Body of pancreas (tissue), 4 donors: ENCODE measurements at regions of chr14 and their contacts with region 1.

Region 1: DNA sequence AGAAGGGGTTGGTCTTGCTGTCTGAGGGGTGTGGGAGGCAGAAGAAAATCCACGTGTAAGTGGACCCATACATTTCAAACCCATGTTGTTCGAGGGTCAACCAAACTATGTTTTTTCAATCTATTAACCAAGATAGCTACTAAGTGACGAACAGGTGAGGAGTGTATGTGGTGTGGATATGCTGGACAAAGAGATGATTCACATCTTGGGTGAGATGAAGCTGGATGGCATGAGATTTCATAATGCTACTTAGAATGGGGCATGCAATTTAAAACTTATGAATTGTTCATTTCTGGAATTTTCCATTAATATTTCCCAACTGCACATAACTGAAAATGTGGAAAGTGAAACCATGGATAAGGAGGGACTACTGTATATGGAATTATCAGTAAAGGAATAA is 17.9 kb upstream of the KTN1 start:
- DNase-seq: no peak
- ATAC-seq: no peak
- H3K4me3 ChIP-seq: no peak overlapping the region
- H3K27ac ChIP-seq: no peak overlapping the region
- H3K4me1 ChIP-seq: peaks cover 3% of the 10 kb centered on the region
- H3K27me3 ChIP-seq: no peaks in the 10 kb centered on the region
- CTCF ChIP-seq: no peak
- POLR2A ChIP-seq: no peak

Region 2: GRCh38 chr14:55446218-55446654 is 115.9 kb before region 1 on chr14:
- intact Hi-C with region 1: loop called (anchors 10 kb)
- DNase-seq: peak; percentile 68 to 71 (median 69)
- ATAC-seq: peak; percentile 77
- H3K4me3 ChIP-seq: no peak overlapping the region
- H3K27ac ChIP-seq: no peak overlapping the region
- H3K4me1 ChIP-seq: peaks cover 7% of the 10 kb centered on the region
- H3K27me3 ChIP-seq: no peaks in the 10 kb centered on the region
- CTCF ChIP-seq: peak; percentile 39 to 78 (median 69)
- POLR2A ChIP-seq: no peak

Region 3: GRCh38 chr14:55482936-55483605 is 79.1 kb before region 1 on chr14:
- intact Hi-C with region 1: no loop called
- DNase-seq: no peak
- ATAC-seq: no peak
- H3K4me3 ChIP-seq: no peak overlapping the region
- H3K27ac ChIP-seq: no peak overlapping the region
- H3K4me1 ChIP-seq: peaks cover 3% of the 10 kb centered on the region
- H3K27me3 ChIP-seq: no peaks in the 10 kb centered on the region
- CTCF ChIP-seq: no peak
- POLR2A ChIP-seq: no peak